Activated CD4-positive, alpha-beta memory T cell treated with anti-CD3 and anti-CD28 coated beads for 36 hours (primary cell): ENCODE measurements at regions of chr3 and their contacts with region 1.

Region 1: GRCh38 chr3:151203051-151203420 is at the start of gene GPR171:
- DNase-seq: peak; percentile 84
- H3K4me3 Mint-ChIP-seq: peak within 1 kb of the TSS; percentile 86
- H3K27ac Mint-ChIP-seq: peak within 1 kb of the TSS; percentile 99
- H3K4me1 Mint-ChIP-seq: peaks cover 65% of the 10 kb centered on the region
- H3K27me3 Mint-ChIP-seq: no peaks in the 10 kb centered on the region
- total RNA-seq, gene GPR171: 70.7 to 74.0 TPM

Region 2: DNA sequence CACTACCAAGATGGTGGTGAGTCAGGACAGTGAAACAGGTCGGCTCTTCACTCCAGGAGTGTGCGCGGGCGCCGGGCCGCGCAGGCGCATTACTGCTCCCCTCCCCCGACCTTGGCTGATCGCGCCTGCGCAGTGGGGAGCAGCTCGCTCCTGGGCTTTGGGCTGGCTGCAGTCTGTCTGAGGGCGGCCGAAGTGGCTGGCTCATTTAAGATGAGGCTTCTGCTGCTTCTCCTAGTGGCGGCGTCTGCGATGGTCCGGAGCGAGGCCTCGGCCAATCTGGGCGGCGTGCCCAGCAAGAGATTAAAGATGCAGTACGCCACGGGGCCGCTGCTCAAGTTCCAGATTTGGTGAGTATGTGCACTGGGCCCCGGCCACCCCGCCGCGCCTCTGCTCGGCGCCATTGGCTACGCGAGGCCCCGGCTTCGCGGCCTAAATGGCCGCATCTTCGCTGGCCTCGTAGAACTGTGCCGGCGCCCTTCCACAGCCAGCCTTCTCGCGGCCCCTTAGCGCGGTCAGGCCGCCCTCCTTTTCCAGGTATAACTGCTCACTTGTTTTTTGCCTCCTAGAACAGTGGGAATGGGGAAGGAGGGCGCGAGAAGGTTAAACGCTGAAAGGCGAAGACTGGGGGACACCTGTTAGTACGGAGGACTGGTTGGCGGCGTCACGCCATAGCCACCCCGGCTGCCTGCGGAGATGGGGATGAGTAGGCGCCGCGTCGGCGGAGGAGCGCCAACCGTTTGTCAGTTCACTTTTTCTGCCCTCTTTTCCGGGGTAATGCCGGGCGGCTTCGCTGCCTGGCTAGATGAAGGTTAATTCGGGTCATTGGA is 599.7 kb before region 1 on chr3 and contains the start of gene SELENOT:
- CTCF ChIA-PET with region 1: no interaction called
- POLR2A ChIA-PET with region 1: no interaction called
- intact Hi-C with region 1: loop called (anchors 5 kb)
- DNase-seq: peak; percentile 96
- H3K4me3 Mint-ChIP-seq: peak within 1 kb of the TSS; percentile 96
- H3K27ac Mint-ChIP-seq: peak within 1 kb of the TSS; percentile 97
- H3K4me1 Mint-ChIP-seq: peaks cover 51% of the 10 kb centered on the region
- H3K27me3 Mint-ChIP-seq: no peaks in the 10 kb centered on the region
- total RNA-seq, gene SELENOT: 105 to 111 TPM

Region 3: DNA sequence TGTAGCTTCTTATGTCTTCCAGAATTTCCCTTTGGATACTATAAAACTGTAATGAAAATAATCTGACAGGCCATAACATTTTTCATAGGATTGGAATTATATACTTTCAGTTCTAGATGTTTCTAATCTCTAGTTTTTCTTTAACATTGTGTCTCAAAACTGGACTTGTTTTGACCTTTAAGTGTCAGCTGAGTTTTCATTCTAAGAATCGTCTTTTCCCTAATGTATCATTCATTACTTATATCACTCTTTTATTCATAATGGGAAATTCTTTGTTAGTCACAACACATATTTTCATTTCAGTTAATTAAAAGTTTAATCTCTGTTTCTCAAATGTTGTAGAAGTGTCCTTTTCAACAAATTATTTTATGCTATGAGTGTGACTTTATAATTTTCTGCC is 11.9 kb before region 1 on chr3:
- CTCF ChIA-PET with region 1: interaction called, 5 read pairs
- POLR2A ChIA-PET with region 1: interaction called, 20 read pairs
- intact Hi-C with region 1: loop called (anchors 1 kb)
- DNase-seq: no peak
- H3K4me3 Mint-ChIP-seq: peak overlapping the region; percentile 47
- H3K27ac Mint-ChIP-seq: peak overlapping the region; percentile 84
- H3K4me1 Mint-ChIP-seq: peaks cover 63% of the 10 kb centered on the region
- H3K27me3 Mint-ChIP-seq: no peaks in the 10 kb centered on the region

Region 4: DNA sequence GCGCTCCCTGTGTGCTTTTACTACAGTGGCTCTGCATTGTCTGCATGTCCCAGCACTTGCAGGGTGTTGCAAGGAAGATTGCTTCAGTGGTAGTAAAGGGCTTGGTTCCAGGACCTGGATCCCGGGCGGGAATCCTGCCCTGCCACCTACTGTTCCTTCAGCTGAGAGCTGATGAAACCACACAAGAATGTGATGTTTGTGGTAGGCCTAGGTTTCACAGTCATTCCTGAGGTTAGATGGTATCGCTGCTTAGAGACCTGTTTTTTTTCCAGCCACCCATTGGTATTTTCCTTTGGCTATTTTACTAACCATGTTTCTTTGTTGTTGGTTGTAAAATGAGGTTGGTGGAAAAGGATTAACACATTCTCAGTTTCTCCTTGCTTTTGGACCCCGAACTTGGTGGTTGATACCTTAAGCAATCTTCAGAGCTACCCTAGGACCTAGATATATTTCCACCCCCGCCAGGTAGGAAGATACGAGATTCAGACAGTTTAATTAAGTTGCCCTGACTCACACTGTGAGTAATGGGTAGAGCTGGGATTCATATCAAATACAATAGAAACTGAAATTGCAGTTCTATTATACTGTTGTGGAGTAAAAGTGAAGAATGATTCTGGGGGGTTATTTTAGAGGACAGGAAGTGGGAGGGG is 102.2 kb after region 1 on chr3:
- CTCF ChIA-PET with region 1: interaction called, 3 read pairs
- POLR2A ChIA-PET with region 1: interaction called, 7 read pairs
- intact Hi-C with region 1: loop called (anchors 1 kb)
- DNase-seq: peak; percentile 52
- H3K4me3 Mint-ChIP-seq: peak overlapping the region; percentile 20
- H3K27ac Mint-ChIP-seq: peak overlapping the region; percentile 56
- H3K4me1 Mint-ChIP-seq: peaks cover 78% of the 10 kb centered on the region
- H3K27me3 Mint-ChIP-seq: peaks cover 17% of the 10 kb centered on the region

Region 5: GRCh38 chr3:152205097-152205593 is 1002.1 kb after region 1 on chr3:
- CTCF ChIA-PET with region 1: no interaction called
- POLR2A ChIA-PET with region 1: no interaction called
- intact Hi-C with region 1: loop called (anchors 2 kb)
- DNase-seq: no peak
- H3K4me3 Mint-ChIP-seq: peak overlapping the region; percentile 79
- H3K27ac Mint-ChIP-seq: peak overlapping the region; percentile 89
- H3K4me1 Mint-ChIP-seq: peaks cover 58% of the 10 kb centered on the region
- H3K27me3 Mint-ChIP-seq: no peaks in the 10 kb centered on the region

Region 6: DNA sequence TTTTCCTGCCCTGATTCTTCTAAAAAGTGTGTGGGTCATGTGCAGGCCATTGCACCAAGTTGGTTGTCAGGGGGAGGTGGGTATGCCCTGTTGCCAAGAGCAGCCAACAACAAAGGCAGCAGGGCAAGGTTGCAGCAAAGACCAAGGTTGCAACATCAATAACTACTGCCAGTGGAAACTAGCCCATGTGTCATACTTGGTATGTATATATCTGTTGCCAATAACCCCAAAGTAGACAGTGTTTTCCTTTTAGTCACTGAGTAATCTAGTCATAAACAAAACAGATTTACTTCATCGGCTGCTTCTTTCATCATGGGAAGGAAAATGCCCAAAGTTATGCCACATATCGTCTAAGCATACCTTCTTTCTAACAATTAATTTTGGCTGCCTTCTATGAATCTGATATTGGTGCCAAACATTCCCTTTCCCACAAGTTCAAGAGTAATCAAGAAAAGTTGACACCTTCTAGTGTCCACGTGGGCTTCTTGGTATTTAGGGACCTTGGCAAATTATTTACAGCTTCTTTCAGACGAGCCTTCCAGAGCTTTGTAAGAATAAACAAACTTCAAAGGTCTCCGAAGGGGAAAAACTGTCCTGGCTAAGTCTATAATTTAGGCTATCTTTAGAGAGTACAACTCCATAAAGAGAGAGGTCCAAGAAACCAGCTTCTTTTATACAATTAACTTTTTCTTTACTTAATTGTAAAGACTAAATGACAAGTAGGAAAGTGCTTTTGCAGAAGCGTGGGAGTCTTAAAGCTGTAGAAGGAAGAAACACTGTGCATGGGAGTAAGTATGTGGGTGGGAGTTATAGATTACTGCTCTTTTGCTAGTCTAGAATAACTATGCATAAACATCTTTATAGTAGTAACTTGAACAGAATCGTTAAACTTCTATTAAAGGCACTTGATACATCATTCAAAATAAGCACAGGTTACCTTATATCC is 1055.7 kb after region 1 on chr3:
- CTCF ChIA-PET with region 1: interaction called, 4 read pairs
- POLR2A ChIA-PET with region 1: no interaction called
- intact Hi-C with region 1: loop called (anchors 5 kb)
- DNase-seq: peak; percentile 86
- H3K4me3 Mint-ChIP-seq: peak overlapping the region; percentile 70
- H3K27ac Mint-ChIP-seq: peak overlapping the region; percentile 95
- H3K4me1 Mint-ChIP-seq: peaks cover 83% of the 10 kb centered on the region
- H3K27me3 Mint-ChIP-seq: no peaks in the 10 kb centered on the region

Region 7: GRCh38 chr3:152583963-152584362 is 1380.9 kb after region 1 on chr3:
- CTCF ChIA-PET with region 1: no interaction called
- POLR2A ChIA-PET with region 1: no interaction called
- intact Hi-C with region 1: no loop called
- DNase-seq: no peak
- H3K4me3 Mint-ChIP-seq: no peak overlapping the region
- H3K27ac Mint-ChIP-seq: no peak overlapping the region
- H3K4me1 Mint-ChIP-seq: no peaks in the 10 kb centered on the region
- H3K27me3 Mint-ChIP-seq: peaks cover 4% of the 10 kb centered on the region